ENCODE measurements at regions of chr2 and their contacts with region 1.

Region 1: DNA sequence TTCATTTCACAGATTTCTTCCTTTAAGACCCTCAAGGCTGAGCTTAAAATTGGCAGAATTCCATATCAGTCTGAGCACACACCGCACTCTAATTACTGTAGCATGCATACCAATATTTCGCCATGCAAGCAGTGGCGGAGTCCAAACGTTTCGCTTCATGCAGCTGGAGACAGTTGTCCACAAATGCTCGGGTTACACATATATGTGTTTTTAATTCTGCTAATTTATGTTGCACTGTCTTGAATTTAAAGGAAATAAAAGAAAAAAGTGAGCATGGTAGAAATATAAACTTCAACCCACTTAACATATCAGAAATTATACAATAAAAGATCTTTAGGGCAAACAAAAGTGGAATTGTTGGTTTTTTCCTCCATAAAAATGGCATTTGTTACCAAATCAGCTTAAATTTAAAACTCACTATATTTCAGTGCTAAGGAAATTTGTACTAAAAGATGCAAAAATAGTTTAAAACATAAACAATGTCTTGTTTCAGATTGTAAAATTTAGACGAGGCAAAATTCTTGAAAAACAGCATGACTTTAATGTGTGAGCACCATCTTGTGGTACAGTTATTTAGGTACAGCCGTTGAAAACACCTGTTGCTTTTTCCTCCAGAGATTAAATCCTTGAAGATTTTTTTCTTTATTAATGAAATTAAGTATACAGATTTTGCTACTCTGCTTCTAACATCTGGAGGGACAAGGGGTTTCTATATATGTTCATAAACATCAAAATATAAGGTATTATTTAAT is 24.1 kb upstream of the KANSL1L start:
- DNase-seq: no peak
- H3K4me3 Mint-ChIP-seq: peak overlapping the region; percentile 66
- H3K27ac Mint-ChIP-seq: peak overlapping the region; percentile 67
- H3K4me1 Mint-ChIP-seq: peaks cover 17% of the 10 kb centered on the region
- H3K27me3 Mint-ChIP-seq: no peaks in the 10 kb centered on the region
- CTCF ChIP-seq: peak; percentile 42

Region 2: GRCh38 chr2:209977386-209978239 is 217.7 kb before region 1 on chr2:
- CTCF ChIA-PET with region 1: interaction called, 5 read pairs
- intact Hi-C with region 1: loop called (anchors 1 kb)
- DNase-seq: no peak
- H3K4me3 Mint-ChIP-seq: no peak overlapping the region
- H3K27ac Mint-ChIP-seq: no peak overlapping the region
- H3K4me1 Mint-ChIP-seq: peaks cover 13% of the 10 kb centered on the region
- H3K27me3 Mint-ChIP-seq: no peaks in the 10 kb centered on the region
- CTCF ChIP-seq: peak; percentile 64

Region 3: GRCh38 chr2:210072922-210073509 is 122.3 kb before region 1 on chr2:
- CTCF ChIA-PET with region 1: interaction called, 10 read pairs
- intact Hi-C with region 1: loop called (anchors 1 kb)
- DNase-seq: peak; percentile 7
- H3K4me3 Mint-ChIP-seq: no peak overlapping the region
- H3K27ac Mint-ChIP-seq: no peak overlapping the region
- H3K4me1 Mint-ChIP-seq: no peaks in the 10 kb centered on the region
- H3K27me3 Mint-ChIP-seq: no peaks in the 10 kb centered on the region
- CTCF ChIP-seq: peak; percentile 53

Region 4: GRCh38 chr2:210086292-210086691 is 109.0 kb before region 1 on chr2:
- CTCF ChIA-PET with region 1: no interaction called
- intact Hi-C with region 1: loop called (anchors 1 kb)
- DNase-seq: no peak
- H3K4me3 Mint-ChIP-seq: no peak overlapping the region
- H3K27ac Mint-ChIP-seq: no peak overlapping the region
- H3K4me1 Mint-ChIP-seq: no peaks in the 10 kb centered on the region
- H3K27me3 Mint-ChIP-seq: no peaks in the 10 kb centered on the region
- CTCF ChIP-seq: no peak

Region 5: DNA sequence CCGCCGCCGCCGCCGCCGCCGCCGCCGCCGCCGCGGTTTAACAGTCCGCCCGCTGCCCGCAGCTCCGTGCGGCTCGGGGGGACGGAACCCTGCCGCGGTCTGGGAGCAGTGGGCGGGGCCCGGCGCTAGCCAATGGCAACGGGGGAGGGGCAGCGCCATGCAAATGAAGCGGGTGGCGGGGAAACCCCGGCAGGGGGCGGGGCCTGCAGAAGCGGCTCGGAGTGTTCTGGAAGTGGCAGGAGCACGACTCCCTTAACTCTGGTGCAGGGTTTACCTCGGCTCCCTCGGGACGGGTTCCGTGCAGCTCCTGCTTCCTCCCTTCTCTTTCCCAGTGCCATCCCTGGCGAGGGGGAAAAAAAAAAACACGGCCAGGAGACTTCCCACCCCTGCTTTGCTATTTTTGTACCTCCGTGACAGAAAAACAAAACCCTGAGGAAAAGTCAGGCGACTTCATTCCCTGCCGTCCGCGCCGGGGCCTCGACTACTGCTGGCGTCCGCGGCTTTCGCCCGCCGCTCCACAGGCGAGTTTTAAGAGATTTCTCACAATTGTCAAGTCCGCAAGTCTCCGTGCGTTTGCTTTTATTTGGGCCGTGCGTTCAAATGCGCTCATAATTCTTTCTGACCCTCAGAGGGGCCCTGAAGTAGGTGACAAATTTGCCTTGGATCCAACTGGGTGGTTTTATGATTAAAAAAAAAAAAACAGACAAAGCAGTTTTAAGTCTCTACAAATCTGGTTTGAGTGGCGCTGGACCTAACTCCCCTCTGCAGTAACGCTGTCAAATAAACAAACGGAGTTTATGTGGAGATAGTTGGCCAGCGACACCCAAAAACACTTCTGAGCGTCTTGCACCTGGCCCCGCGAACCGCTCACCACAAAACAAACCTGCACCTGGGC is 23.7 kb before region 1 on chr2 and contains the start of gene KANSL1L:
- CTCF ChIA-PET with region 1: interaction called, 32 read pairs
- intact Hi-C with region 1: no loop called
- DNase-seq: peak; percentile 100
- H3K4me3 Mint-ChIP-seq: peak within 1 kb of the TSS; percentile 98
- H3K27ac Mint-ChIP-seq: peak within 1 kb of the TSS; percentile 100
- H3K4me1 Mint-ChIP-seq: peaks cover 23% of the 10 kb centered on the region
- H3K27me3 Mint-ChIP-seq: no peaks in the 10 kb centered on the region
- CTCF ChIP-seq: no peak
- total RNA-seq, gene KANSL1L: 45.9 and 54.0 TPM in 2 replicates

Region 6: GRCh38 chr2:210768329-210768910 is 573.1 kb after region 1 on chr2:
- CTCF ChIA-PET with region 1: no interaction called
- intact Hi-C with region 1: no loop called
- DNase-seq: no peak
- H3K4me3 Mint-ChIP-seq: no peak overlapping the region
- H3K27ac Mint-ChIP-seq: no peak overlapping the region
- H3K4me1 Mint-ChIP-seq: no peaks in the 10 kb centered on the region
- H3K27me3 Mint-ChIP-seq: no peaks in the 10 kb centered on the region
- CTCF ChIP-seq: no peak

Region 7: GRCh38 chr2:211175956-211176355 is 980.7 kb after region 1 on chr2:
- CTCF ChIA-PET with region 1: no interaction called
- intact Hi-C with region 1: no loop called
- DNase-seq: no peak
- H3K4me3 Mint-ChIP-seq: no peak overlapping the region
- H3K27ac Mint-ChIP-seq: no peak overlapping the region
- H3K4me1 Mint-ChIP-seq: peaks cover 27% of the 10 kb centered on the region
- H3K27me3 Mint-ChIP-seq: no peaks in the 10 kb centered on the region
- CTCF ChIP-seq: no peak